ENCODE measurements at regions of chr12 and their contacts with region 1.

Region 1: DNA sequence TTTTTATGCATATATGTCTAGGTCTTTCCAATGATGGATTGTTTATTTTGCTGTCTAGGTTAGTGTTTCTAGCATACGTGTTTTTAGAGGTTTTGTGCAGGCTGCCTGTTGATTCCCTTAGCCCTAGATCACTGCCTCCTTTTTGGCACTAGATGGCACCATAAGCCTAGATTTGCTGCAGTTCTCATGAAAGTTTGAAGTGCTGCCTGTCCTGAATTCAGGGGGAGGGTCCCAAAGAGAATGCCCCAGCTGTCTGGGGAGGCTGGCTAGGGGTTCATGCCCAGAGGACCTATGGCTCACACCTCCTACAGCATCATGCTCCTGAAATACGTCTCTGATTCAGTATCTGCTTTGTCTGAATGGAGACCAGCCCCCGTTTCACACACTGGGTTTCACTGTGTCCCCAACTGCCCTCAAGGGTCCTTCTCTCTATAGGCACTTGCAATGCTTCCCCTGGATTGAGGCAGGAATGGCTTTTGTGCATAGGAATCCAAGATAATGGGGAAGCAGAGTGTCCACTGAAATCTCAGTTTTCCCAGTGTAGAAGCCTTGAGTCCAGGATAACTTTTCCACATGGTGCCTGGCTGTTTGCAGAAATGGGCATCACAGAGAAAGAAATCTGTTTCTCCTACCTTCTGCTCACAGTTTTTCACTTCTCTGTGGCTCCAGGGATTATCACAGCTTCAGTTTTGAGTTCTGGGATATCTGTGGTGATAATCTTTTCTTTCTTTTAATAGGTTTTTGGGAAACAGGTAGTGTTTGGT is 14.2 kb upstream of the TXNRD1 start:
- DNase-seq: peak; percentile 41
- H3K4me3 ChIP-seq: no peak overlapping the region
- H3K27ac ChIP-seq: no peak overlapping the region
- H3K4me1 ChIP-seq: no peaks in the 10 kb centered on the region
- H3K27me3 ChIP-seq: no peaks in the 10 kb centered on the region
- CTCF ChIP-seq: peak; percentile 90 to 93

Region 2: GRCh38 chr12:103334466-103334865 is 867.0 kb before region 1 on chr12:
- CTCF ChIA-PET with region 1: no interaction called
- dilution Hi-C with region 1: no loop called
- in situ Hi-C with region 1: no loop called
- intact Hi-C with region 1: no loop called
- DNase-seq: no peak
- H3K4me3 ChIP-seq: no peak overlapping the region
- H3K27ac ChIP-seq: no peak overlapping the region
- H3K4me1 ChIP-seq: no peaks in the 10 kb centered on the region
- H3K27me3 ChIP-seq: no peaks in the 10 kb centered on the region
- CTCF ChIP-seq: no peak

Region 3: GRCh38 chr12:104177663-104178501 is 23.5 kb before region 1 on chr12:
- CTCF ChIA-PET with region 1: no interaction called
- dilution Hi-C with region 1: no loop called
- in situ Hi-C with region 1: no loop called
- intact Hi-C with region 1: no loop called
- DNase-seq: peak; percentile 88
- H3K4me3 ChIP-seq: no peak overlapping the region
- H3K27ac ChIP-seq: peak overlapping the region; percentile 5
- H3K4me1 ChIP-seq: peaks cover 36% of the 10 kb centered on the region
- H3K27me3 ChIP-seq: no peaks in the 10 kb centered on the region
- CTCF ChIP-seq: peak; percentile 42 to 61

Region 4: DNA sequence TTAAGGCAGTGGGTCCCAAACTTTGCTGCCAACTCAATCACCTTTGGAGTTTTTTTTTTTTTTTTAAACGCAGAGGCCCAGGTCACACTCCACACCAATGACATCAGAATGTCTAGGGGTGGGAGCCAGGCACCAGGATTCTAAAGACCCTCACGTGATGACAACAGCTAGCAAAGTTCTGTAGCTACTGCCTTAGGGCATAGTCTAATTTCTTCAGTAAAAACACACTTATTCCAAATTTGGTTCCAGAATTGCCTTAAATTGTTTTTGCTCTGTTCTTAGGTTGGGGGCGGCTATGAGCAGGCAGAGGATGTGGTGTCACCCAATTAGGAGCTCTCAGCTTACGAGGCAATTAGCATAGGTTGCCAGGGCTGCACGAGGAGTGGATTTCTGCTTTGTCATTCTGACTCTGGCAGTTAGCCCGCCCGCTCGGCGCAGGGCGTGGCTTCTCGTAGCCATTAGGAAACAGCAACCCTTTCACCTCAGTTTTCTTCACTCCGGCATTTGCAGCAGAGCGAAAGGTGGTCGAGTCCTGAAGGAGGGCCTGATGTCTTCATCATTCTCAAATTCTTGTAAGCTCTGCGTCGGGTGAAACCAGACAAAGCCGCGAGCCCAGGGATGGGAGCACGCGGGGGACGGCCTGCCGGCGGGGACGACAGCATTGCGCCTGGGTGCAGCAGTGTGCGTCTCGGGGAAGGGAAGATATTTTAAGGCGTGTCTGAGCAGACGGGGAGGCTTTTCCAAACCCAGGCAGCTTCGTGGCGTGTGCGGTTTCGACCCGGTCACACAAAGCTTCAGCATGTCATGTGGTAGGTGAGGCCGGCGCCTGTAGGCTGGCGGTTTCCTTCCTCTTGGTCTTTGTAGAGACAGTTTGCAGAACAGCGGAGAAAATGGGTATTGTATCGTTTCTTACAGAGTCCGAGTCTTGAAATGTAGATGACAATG is 85.4 kb after region 1 on chr12:
- CTCF ChIA-PET with region 1: no interaction called
- dilution Hi-C with region 1: no loop called
- in situ Hi-C with region 1: no loop called
- intact Hi-C with region 1: loop called (anchors 1 kb)
- DNase-seq: peak; percentile 97
- H3K4me3 ChIP-seq: peak overlapping the region; percentile 60 to 100 (median 84)
- H3K27ac ChIP-seq: peak overlapping the region; percentile 99
- H3K4me1 ChIP-seq: peaks cover 37% of the 10 kb centered on the region
- H3K27me3 ChIP-seq: no peaks in the 10 kb centered on the region
- CTCF ChIP-seq: no peak

Region 5: DNA sequence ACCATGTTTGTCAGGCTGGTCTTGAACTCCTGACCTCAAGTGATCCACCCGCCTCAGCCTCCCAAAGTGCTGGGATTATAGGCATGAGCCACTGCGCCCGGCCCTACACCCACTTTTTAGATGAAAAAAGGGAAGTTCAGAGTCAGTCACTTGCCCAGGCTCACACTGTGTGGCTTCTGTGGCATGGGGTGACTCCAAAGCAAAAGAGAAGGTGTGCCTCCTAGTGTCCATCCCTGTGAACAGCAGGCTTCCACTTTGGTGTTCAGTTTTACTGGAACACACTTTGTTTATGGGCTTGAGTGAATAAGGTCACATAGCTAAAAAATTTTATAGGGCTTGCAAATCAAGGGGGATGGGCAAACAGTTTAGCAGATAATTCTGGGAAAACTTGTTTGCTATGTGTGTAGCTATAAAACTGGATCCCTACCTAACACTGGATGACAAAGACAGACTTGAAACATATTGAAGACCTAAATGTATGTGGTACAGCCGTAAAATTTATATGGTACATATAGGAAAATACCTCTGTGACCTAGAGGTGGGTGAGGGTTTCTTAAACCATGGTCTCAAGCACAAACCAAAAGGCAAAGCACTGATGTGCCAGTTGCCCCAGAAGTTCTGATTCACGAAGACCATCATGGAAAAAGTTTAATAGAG is 157.1 kb after region 1 on chr12:
- CTCF ChIA-PET with region 1: no interaction called
- dilution Hi-C with region 1: no loop called
- in situ Hi-C with region 1: loop called in 1 of 2 experiments (anchors 10 kb)
- intact Hi-C with region 1: loop called (anchors 1 kb)
- DNase-seq: peak; percentile 40
- H3K4me3 ChIP-seq: no peak overlapping the region
- H3K27ac ChIP-seq: no peak overlapping the region
- H3K4me1 ChIP-seq: no peaks in the 10 kb centered on the region
- H3K27me3 ChIP-seq: no peaks in the 10 kb centered on the region
- CTCF ChIP-seq: peak; percentile 86 to 88

Region 6: DNA sequence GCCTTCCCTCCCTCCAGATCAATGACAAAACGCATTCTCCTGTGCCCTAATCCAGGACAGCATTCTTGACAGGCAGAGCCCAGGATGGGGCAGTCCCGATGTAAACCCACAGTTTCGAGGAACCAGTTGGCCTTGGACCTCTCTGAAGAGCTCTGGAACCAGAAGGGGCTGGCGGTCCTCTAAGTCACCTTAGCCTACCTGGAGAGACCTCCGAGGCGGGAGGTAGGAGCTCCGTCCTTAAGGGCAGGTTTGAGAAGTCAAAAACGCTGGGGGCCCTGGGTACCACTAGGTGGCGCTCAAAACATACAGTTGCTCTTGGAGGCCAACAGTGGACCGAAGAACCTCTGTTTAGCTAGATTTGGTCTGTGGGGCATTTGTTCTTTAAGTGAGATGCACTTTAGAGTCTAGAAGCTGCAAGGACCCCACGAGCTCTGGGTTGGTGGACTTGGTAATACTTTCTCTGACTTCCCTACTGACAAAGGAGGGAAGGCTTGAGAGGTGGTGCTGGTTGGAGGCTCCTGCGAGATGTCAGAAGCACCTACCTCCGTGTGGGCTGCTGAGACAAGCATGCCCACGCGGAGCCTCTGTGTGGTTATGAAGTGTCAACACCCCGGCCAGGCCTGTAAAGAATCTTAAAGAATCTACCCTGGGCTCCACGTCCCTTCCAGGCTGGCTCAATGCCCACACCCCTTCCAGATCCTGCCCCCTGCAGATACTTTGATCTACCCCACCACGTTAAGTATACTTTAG is 180.5 kb after region 1 on chr12:
- CTCF ChIA-PET with region 1: no interaction called
- dilution Hi-C with region 1: no loop called
- in situ Hi-C with region 1: no loop called
- intact Hi-C with region 1: loop called (anchors 1 kb)
- DNase-seq: peak; percentile 62
- H3K4me3 ChIP-seq: no peak overlapping the region
- H3K27ac ChIP-seq: no peak overlapping the region
- H3K4me1 ChIP-seq: no peaks in the 10 kb centered on the region
- H3K27me3 ChIP-seq: no peaks in the 10 kb centered on the region
- CTCF ChIP-seq: peak; percentile 93 to 98

Region 7: GRCh38 chr12:104671407-104672098 is 470.1 kb after region 1 on chr12:
- CTCF ChIA-PET with region 1: no interaction called
- dilution Hi-C with region 1: no loop called
- in situ Hi-C with region 1: no loop called
- intact Hi-C with region 1: loop called (anchors 5 kb)
- DNase-seq: peak; percentile 96
- H3K4me3 ChIP-seq: no peak overlapping the region
- H3K27ac ChIP-seq: peak overlapping the region; percentile 55
- H3K4me1 ChIP-seq: peaks cover 52% of the 10 kb centered on the region
- H3K27me3 ChIP-seq: no peaks in the 10 kb centered on the region
- CTCF ChIP-seq: no peak

Region 8: GRCh38 chr12:105100998-105101397 is 899.6 kb after region 1 on chr12:
- CTCF ChIA-PET with region 1: no interaction called
- dilution Hi-C with region 1: no loop called
- in situ Hi-C with region 1: no loop called
- intact Hi-C with region 1: loop called (anchors 2 kb)
- DNase-seq: no peak
- H3K4me3 ChIP-seq: no peak overlapping the region
- H3K27ac ChIP-seq: no peak overlapping the region
- H3K4me1 ChIP-seq: peaks cover 5% of the 10 kb centered on the region
- H3K27me3 ChIP-seq: no peaks in the 10 kb centered on the region
- CTCF ChIP-seq: no peak